Activated T-helper 2 cell treated with anti-CD3 and anti-CD28 coated beads, Interferon-gamma antibody, Interleukin-2, Interleukin-4, amounts not matched to agents 10 μg/mL and 5 μg/mL and 100 μg/mL, durations not matched to agents 14 hours and 24 hours and 36 hours (primary cell): ENCODE measurements at regions of chr12 and their contacts with region 1.

Region 1: DNA sequence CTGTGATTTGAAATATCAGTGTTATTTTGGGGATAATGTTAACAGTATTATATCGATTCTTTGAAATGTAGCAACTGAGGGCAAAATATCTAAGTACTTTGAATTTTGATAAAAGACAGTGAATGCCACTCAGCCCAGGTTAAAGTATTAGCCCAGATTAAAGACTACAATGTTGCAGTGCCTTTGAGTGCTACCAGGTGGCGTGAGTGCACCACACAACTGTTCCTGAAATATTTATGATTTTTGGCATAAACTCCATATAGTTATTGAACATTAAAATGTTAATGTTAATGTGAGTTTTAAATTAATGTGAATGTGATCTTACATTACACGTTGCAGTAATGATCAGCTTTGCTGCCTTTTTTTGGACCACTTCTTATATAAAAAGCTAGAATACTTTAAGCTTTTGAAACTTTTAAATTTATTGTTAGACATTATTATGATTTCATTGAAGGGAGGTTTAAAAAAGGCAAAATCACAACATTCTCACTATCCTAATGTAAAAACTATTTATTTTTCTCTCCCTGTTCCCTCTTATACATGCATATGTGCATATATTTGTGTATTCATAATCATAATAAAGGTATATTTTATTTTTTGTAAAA is 22.5 kb downstream of the MRPS35 start:
- DNase-seq: no peak
- H3K4me3 Mint-ChIP-seq: no peak overlapping the region
- H3K27ac Mint-ChIP-seq: no peak overlapping the region
- H3K4me1 Mint-ChIP-seq: peaks cover 2% of the 10 kb centered on the region
- H3K27me3 Mint-ChIP-seq: no peaks in the 10 kb centered on the region

Region 2: DNA sequence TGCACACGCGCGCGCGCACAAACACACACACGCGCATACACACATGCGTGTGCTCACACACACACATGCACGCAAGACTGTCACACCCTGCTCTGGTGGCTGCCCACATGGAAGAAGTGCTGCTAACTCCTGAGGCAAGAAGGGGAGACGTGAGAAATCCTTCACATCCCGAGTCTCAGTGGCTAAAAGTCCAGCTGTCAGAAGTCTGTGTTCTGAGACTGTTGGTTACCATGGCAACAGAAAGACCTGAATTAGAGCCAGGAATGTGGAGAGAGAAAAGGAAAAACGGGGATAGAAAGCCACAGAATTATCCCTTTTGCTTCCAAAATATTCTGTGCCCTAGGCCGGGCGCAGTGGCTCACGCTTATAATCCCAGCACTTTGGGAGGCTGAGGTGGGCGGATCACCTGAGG is 137.9 kb before region 1 on chr12:
- intact Hi-C with region 1: no loop called
- DNase-seq: no peak
- H3K4me3 Mint-ChIP-seq: no peak overlapping the region
- H3K27ac Mint-ChIP-seq: no peak overlapping the region
- H3K4me1 Mint-ChIP-seq: peaks cover 5% of the 10 kb centered on the region
- H3K27me3 Mint-ChIP-seq: no peaks in the 10 kb centered on the region

Region 3: DNA sequence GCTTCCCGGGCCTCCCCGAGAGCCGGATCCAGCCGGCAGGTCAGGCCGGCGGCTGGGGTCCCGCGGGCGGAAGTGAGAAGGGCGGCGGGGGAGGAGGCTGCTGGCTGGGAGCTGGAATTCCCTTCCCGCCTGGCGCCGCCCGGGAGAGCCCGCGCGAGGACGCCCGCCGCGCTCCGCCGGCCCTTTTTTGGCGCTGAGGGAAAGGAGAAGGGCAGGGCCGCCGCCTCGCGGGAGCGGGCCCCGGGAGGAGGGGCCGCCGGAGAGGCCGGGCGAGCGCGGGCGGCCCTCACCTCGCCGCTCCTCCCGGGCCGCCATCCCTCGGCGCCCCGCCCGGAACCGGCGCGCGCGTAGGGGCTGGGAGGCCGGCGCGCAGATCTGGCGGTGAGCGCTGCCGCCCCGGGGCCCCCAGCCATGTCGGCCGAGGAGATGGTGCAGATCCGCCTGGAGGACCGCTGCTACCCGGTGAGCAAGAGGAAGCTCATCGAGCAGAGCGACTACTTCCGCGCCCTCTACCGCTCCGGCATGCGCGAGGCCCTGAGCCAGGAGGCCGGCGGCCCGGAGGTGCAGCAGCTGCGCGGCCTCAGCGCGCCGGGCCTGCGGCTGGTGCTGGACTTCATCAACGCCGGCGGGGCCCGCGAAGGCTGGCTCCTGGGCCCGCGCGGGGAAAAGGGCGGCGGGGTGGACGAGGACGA is 46.9 kb after region 1 on chr12 and contains the starts of genes KLHL42 and MANSC4:
- intact Hi-C with region 1: loop called (anchors 5 kb)
- DNase-seq: peak; percentile 65
- H3K4me3 Mint-ChIP-seq: peak within 1 kb of the TSS; percentile 80
- H3K27ac Mint-ChIP-seq: peak within 1 kb of the TSS; percentile 81
- H3K4me1 Mint-ChIP-seq: peaks cover 28% of the 10 kb centered on the region
- H3K27me3 Mint-ChIP-seq: peaks cover 18% of the 10 kb centered on the region
- total RNA-seq, gene KLHL42: 16.2 and 16.9 TPM in 2 replicates
- total RNA-seq, gene MANSC4: not detected in 2 replicates

Region 4: DNA sequence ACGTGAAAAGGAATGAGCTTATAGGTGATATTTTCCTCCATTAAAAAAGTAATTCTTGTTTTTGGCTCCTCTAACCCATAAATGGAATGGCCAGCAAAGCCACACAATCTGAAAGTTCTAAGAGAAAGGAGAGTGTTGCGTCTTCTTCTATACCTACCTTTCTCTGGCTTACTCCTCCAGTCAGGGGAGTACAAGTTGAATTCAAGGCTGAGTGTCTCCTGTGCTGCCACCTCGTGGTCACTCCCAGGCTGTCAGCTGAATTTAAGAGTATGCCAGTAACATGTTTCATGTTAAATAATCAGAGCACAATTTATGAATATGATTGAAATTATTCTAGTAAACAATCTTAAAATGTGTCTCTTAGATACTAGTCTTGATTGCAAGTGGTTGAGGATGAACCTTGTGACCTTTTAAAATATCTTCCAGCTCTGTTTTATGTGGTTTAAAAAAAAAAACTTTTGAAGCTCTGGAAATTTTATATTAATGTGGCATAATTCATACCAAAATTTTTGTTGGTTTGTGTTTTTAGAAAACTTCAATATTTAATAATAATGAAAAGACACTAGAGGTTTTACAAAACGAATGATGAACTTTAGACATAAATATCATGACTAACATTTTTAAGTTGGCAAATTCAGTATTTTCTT is 207.7 kb after region 1 on chr12:
- intact Hi-C with region 1: loop called (anchors 1 kb)
- DNase-seq: peak; percentile 42
- H3K4me3 Mint-ChIP-seq: no peak overlapping the region
- H3K27ac Mint-ChIP-seq: no peak overlapping the region
- H3K4me1 Mint-ChIP-seq: no peaks in the 10 kb centered on the region
- H3K27me3 Mint-ChIP-seq: peaks cover 15% of the 10 kb centered on the region

Region 5: GRCh38 chr12:28872654-28873268 is 1139.6 kb after region 1 on chr12:
- intact Hi-C with region 1: loop called (anchors 10 kb)
- DNase-seq: no peak
- H3K4me3 Mint-ChIP-seq: no peak overlapping the region
- H3K27ac Mint-ChIP-seq: no peak overlapping the region
- H3K4me1 Mint-ChIP-seq: no peaks in the 10 kb centered on the region
- H3K27me3 Mint-ChIP-seq: no peaks in the 10 kb centered on the region